ENCODE measurements at regions of chr16 and their contacts with region 1.

Region 1: GRCh38 chr16:69286941-69287713 is 24.0 kb upstream of the VPS4A start:
- DNase-seq: peak; percentile 51
- ATAC-seq: peak; percentile 36
- H3K4me3 Mint-ChIP-seq: no peak overlapping the region
- H3K27ac Mint-ChIP-seq: no peak overlapping the region
- H3K4me1 Mint-ChIP-seq: peaks cover 3% of the 10 kb centered on the region
- H3K27me3 Mint-ChIP-seq: no peaks in the 10 kb centered on the region

Region 2: GRCh38 chr16:68848786-68849185 is 438.3 kb before region 1 on chr16:
- CTCF ChIA-PET with region 1: no interaction called
- POLR2A ChIA-PET with region 1: no interaction called
- intact Hi-C with region 1: loop called in 1 of 2 experiments (anchors 5 kb)
- DNase-seq: no peak
- ATAC-seq: no peak
- H3K4me3 Mint-ChIP-seq: no peak overlapping the region
- H3K27ac Mint-ChIP-seq: no peak overlapping the region
- H3K4me1 Mint-ChIP-seq: peaks cover 26% of the 10 kb centered on the region
- H3K27me3 Mint-ChIP-seq: no peaks in the 10 kb centered on the region

Region 3: DNA sequence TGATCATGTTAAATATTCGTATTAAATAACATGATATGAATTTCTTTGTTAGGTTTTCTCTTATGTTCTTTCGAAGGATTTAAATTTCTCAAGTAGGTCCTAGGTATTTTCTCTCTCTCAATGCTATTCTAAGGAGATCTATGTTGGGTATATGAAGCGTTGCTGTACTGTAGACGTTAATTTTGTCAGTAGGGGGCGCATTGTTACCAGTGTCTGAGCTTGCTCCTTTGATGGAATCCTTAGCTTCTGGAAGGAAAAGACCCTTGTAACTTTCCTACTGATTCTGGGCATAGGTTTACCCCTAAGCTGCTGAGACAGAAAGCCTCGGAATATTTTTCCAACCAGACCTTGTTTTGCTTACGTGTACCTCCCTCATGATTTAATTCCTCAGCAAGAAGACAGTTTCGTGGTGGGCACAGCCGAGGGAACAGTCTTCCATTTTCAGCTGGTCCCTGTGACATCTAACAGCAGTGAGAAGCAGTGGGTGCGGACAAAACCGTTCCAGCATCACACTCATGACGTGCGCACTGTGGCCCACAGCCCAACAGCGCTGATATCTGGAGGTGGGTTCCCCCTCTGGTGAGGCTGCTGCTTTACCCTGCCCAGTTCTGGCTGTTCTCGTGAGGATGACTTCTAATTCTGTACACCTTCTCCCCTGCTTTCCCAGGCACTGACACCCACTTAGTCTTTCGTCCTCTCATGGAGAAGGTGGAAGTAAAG is 136.8 kb before region 1 on chr16:
- CTCF ChIA-PET with region 1: interaction called, 90 read pairs
- POLR2A ChIA-PET with region 1: no interaction called
- intact Hi-C with region 1: loop called (anchors 1 kb)
- DNase-seq: peak; percentile 60
- ATAC-seq: peak; percentile 78
- H3K4me3 Mint-ChIP-seq: no peak overlapping the region
- H3K27ac Mint-ChIP-seq: no peak overlapping the region
- H3K4me1 Mint-ChIP-seq: no peaks in the 10 kb centered on the region
- H3K27me3 Mint-ChIP-seq: no peaks in the 10 kb centered on the region

Region 4: DNA sequence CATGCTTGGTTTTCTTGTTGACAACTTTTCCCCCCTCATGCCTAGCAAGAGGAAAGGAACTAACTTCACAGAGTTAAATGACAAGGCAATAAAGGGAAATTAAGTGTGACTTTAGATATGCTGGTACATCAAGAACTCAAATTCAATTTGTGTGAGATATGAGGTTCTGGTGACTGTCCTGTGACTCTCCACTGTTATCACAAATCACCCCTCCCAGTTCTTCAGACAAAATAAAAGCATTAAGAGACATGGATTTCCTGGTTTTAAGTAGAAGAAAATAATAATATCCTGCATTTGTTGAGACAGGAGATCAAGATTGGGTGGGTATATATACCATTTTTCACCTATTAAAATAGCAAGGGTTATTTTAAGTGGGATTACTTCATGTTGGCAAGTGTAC is 54.0 kb before region 1 on chr16:
- CTCF ChIA-PET with region 1: no interaction called
- POLR2A ChIA-PET with region 1: no interaction called
- intact Hi-C with region 1: no loop called
- DNase-seq: no peak
- ATAC-seq: no peak
- H3K4me3 Mint-ChIP-seq: no peak overlapping the region
- H3K27ac Mint-ChIP-seq: no peak overlapping the region
- H3K4me1 Mint-ChIP-seq: no peaks in the 10 kb centered on the region
- H3K27me3 Mint-ChIP-seq: no peaks in the 10 kb centered on the region

Region 5: GRCh38 chr16:69276148-69277115 is 10.7 kb before region 1 on chr16:
- CTCF ChIA-PET with region 1: interaction called, 20 read pairs
- POLR2A ChIA-PET with region 1: no interaction called
- intact Hi-C with region 1: no loop called
- DNase-seq: no peak
- ATAC-seq: no peak
- H3K4me3 Mint-ChIP-seq: no peak overlapping the region
- H3K27ac Mint-ChIP-seq: no peak overlapping the region
- H3K4me1 Mint-ChIP-seq: no peaks in the 10 kb centered on the region
- H3K27me3 Mint-ChIP-seq: no peaks in the 10 kb centered on the region